MCF 10A (cell line): ENCODE measurements at regions of chr21 and their contacts with region 1.

Region 1: DNA sequence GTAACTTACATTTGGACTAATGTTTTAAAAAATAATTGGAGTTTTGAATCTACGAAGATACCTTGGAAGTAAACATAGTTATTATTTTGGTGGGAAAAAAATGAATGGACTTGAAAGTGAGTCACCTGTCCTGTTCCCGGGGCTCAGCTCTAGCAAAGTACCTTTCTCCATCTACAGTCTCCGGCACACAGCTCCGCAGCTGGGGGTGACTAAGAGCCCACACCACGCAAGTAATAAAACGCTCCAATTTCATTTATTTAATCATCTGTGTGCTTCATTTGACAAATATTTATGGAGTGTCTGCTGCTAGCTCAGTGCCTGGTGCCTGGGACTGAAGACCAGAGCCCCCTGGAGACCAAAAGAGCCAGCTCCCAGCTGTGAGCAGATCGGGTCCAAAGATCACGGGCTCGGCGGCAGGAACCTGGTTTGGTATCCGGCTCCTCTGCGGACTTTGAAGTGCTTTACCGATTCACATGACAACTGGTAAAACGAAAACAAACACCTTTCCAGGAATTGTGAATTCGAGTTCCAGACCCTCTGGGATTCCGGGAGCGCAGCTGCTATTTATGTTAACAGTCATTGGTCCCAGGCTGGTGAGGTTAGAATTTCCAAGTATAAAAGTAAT is 1.7 kb upstream of the RIPK4 start:
- DNase-seq: peak; percentile 72
- H3K4me3 Mint-ChIP-seq: peak overlapping the region; percentile 87
- H3K27ac Mint-ChIP-seq: peak overlapping the region; percentile 87
- H3K4me1 Mint-ChIP-seq: peaks cover 25% of the 10 kb centered on the region
- H3K27me3 Mint-ChIP-seq: no peaks in the 10 kb centered on the region
- CTCF ChIP-seq: peak; percentile 28

Region 2: GRCh38 chr21:40433591-40434006 is 1335.0 kb before region 1 on chr21:
- CTCF ChIA-PET with region 1: no interaction called
- POLR2A ChIA-PET with region 1: no interaction called
- intact Hi-C with region 1: no loop called
- DNase-seq: no peak
- H3K4me3 Mint-ChIP-seq: no peak overlapping the region
- H3K27ac Mint-ChIP-seq: no peak overlapping the region
- H3K4me1 Mint-ChIP-seq: no peaks in the 10 kb centered on the region
- H3K27me3 Mint-ChIP-seq: no peaks in the 10 kb centered on the region
- CTCF ChIP-seq: no peak

Region 3: GRCh38 chr21:41167348-41168342 is 600.9 kb before region 1 on chr21 and contains the start of gene BACE2:
- CTCF ChIA-PET with region 1: interaction called, 3 read pairs
- POLR2A ChIA-PET with region 1: no interaction called
- intact Hi-C with region 1: loop called (anchors 10 kb)
- DNase-seq: peak; percentile 81
- H3K4me3 Mint-ChIP-seq: peak within 1 kb of the TSS; percentile 83
- H3K27ac Mint-ChIP-seq: peak within 1 kb of the TSS; percentile 58
- H3K4me1 Mint-ChIP-seq: peaks cover 32% of the 10 kb centered on the region
- H3K27me3 Mint-ChIP-seq: no peaks in the 10 kb centered on the region
- CTCF ChIP-seq: peak; percentile 79
- total RNA-seq, gene BACE2: 21.3 and 22.0 TPM in 2 replicates

Region 4: GRCh38 chr21:41250194-41250918 is 518.2 kb before region 1 on chr21:
- CTCF ChIA-PET with region 1: no interaction called
- POLR2A ChIA-PET with region 1: no interaction called
- intact Hi-C with region 1: no loop called
- DNase-seq: peak; percentile 26
- H3K4me3 Mint-ChIP-seq: no peak overlapping the region
- H3K27ac Mint-ChIP-seq: no peak overlapping the region
- H3K4me1 Mint-ChIP-seq: peaks cover 13% of the 10 kb centered on the region
- H3K27me3 Mint-ChIP-seq: no peaks in the 10 kb centered on the region
- CTCF ChIP-seq: no peak

Region 5: GRCh38 chr21:41726945-41727783 is 41.4 kb before region 1 on chr21:
- CTCF ChIA-PET with region 1: interaction called, 4 read pairs
- POLR2A ChIA-PET with region 1: interaction called, 16 read pairs
- intact Hi-C with region 1: loop called (anchors 5 kb)
- DNase-seq: peak; percentile 92
- H3K4me3 Mint-ChIP-seq: peak overlapping the region; percentile 55
- H3K27ac Mint-ChIP-seq: peak overlapping the region; percentile 84
- H3K4me1 Mint-ChIP-seq: peaks cover 25% of the 10 kb centered on the region
- H3K27me3 Mint-ChIP-seq: no peaks in the 10 kb centered on the region
- CTCF ChIP-seq: no peak

Region 6: GRCh38 chr21:41752231-41752681 is 16.3 kb before region 1 on chr21:
- CTCF ChIA-PET with region 1: interaction called, 16 read pairs
- POLR2A ChIA-PET with region 1: interaction called, 108 read pairs
- intact Hi-C with region 1: no loop called
- DNase-seq: peak; percentile 84
- H3K4me3 Mint-ChIP-seq: peak overlapping the region; percentile 64
- H3K27ac Mint-ChIP-seq: peak overlapping the region; percentile 87
- H3K4me1 Mint-ChIP-seq: peaks cover 32% of the 10 kb centered on the region
- H3K27me3 Mint-ChIP-seq: no peaks in the 10 kb centered on the region
- CTCF ChIP-seq: no peak

Region 7: DNA sequence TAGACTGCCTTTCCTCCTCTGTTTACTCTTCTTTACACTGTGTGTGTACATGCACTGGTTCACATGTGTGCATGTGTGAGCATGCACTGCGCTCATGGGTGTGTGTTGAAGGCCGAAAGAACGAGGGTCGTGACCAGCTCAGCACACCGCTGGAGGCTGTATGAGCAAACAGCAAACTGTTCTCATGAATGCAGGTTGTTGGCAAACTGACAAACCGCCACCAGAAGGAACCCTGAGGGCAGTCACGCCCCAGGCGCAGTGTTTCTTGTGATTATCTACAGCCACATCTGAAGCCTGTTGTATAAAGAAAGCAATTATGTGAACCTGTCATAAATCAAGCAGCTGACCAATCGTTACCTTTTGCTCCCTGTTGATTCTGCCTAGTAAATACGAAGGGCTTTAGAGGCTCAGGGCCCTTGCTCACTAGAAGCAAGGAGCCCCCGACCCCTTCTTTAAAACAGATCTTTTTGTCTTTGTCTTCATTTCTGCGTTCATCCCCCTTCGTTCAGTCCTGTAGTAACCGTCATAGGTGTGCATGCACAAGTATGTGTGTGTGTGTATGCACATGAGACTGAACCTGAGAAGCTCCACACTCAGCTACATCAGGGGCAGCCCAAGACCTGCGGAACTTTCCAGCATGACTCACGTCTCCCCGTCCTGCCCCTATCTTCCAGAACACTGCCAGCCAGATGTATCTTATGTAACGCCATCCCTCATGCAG is 15.1 kb after region 1 on chr21:
- CTCF ChIA-PET with region 1: interaction called, 12 read pairs
- POLR2A ChIA-PET with region 1: interaction called, 136 read pairs
- intact Hi-C with region 1: no loop called
- DNase-seq: peak; percentile 93
- H3K4me3 Mint-ChIP-seq: peak overlapping the region; percentile 7
- H3K27ac Mint-ChIP-seq: no peak overlapping the region
- H3K4me1 Mint-ChIP-seq: peaks cover 29% of the 10 kb centered on the region
- H3K27me3 Mint-ChIP-seq: no peaks in the 10 kb centered on the region
- CTCF ChIP-seq: no peak

Region 8: DNA sequence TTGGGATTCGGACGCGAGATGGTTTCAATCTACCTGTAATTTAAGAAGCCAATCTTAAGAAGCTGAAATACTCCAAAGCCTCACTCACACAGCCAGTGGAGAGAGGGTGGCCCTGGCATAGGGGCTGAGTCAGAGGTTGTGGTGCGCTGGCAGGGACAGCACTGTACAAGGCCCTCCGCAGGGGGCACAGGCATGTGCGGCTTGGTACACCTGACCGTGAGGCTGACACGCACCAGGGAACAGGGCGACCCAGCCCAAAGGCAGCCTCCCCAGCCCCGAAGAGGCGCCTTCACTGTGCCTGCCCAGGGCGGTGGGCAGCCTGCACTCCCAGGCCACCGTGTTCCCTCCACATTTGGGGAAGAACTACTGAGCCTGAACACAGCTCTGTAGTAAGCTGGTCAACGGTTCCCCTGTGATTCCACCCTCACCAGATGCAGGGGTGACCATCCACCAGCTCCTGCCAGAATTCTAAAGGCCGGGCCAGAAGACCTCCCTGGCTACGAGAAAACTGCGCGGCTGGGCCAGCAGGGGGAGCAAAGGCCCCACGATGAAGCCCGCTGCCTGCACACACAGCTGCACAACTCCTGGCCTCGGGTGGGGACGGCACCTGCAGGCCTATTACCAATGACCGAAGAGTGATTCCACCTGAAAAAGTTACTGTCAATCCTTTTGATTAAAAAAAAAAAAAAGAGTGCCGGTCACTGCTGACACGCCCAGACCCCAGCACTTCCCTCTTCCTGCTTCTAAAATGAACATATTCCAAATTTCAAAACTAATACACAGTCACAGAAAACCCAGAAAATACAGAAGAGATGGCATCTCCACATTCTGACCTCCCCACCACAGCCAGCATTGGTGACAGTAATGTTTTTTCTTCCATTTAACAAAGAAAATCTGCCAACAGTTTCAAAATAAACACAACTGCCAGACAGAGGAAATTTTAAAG is 47.9 kb after region 1 on chr21:
- CTCF ChIA-PET with region 1: interaction called, 5 read pairs
- POLR2A ChIA-PET with region 1: interaction called, 7 read pairs
- intact Hi-C with region 1: loop called (anchors 1 kb)
- DNase-seq: peak; percentile 27
- H3K4me3 Mint-ChIP-seq: no peak overlapping the region
- H3K27ac Mint-ChIP-seq: peak overlapping the region; percentile 31
- H3K4me1 Mint-ChIP-seq: peaks cover 9% of the 10 kb centered on the region
- H3K27me3 Mint-ChIP-seq: no peaks in the 10 kb centered on the region
- CTCF ChIP-seq: peak; percentile 32